ENCODE measurements at regions of chr1 and their contacts with region 1.

Region 1: DNA sequence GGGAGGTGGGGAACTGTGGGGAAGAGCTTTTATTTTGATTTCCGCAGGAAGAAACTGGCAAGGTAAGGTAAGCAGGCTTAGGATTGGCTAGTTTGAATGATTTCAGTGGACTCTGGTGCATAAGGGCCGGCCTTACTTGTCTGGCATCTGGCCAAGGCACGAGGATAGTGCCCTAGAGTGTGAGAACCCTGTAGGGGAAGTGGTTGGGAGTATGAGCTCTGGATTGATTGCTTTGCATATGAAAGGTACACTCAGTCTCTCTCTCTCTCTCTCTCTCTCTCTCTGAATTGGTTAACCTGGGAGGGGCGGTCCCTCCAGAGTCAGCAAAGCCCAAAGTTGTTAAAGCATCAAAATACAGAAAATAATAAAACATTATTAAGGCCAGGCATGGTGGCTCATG is 463.0 kb downstream of the SIPA1L2 start:
- DNase-seq: no peak
- ATAC-seq: no peak
- H3K4me3 ChIP-seq: no peak overlapping the region
- H3K27ac ChIP-seq: no peak overlapping the region
- H3K4me1 ChIP-seq: peaks cover 29% of the 10 kb centered on the region
- H3K27me3 ChIP-seq: no peaks in the 10 kb centered on the region
- CTCF ChIP-seq: no peak

Region 2: DNA sequence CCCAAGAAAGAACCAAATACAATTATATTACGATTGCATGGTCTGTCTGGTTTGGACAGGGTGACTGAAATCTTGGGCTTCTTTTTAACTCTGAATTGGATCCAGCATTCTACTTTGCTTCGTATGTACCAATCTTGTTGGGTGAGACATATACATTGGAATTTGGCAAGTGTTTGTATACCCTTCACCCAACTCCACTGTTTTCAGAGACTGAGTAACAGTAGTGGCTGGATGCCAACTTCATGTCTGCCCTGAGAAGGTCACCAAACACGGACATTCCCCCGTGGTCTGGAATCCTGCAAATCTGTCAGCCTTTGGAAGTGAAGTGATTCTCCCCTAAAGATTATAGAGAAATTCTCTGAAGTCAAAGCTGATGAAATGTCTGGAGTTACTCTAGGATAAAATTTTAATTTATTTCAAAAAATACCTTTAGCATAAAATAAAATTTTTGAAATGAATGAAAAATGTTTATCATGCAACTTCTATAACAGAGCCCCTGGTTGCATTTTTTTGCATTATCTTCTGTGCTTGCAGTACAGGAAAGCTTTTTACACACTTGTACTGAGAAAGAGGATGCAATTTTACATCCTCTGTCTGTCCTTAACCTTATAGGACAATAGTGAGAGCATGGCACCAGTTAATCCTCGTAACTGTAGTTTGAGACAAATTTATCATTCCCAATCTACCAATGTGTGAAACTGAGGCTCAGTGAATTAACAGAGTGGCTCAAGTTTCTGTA is 338.6 kb before region 1 on chr1:
- CTCF ChIA-PET with region 1: no interaction called
- POLR2A ChIA-PET with region 1: no interaction called
- intact Hi-C with region 1: loop called (anchors 5 kb)
- DNase-seq: peak; percentile 99
- ATAC-seq: peak; percentile 88
- H3K4me3 ChIP-seq: peak overlapping the region; percentile 51
- H3K27ac ChIP-seq: peak overlapping the region; percentile 97
- H3K4me1 ChIP-seq: peaks cover 38% of the 10 kb centered on the region
- H3K27me3 ChIP-seq: no peaks in the 10 kb centered on the region
- CTCF ChIP-seq: no peak

Region 3: GRCh38 chr1:232033285-232033684 is 133.7 kb before region 1 on chr1:
- CTCF ChIA-PET with region 1: no interaction called
- POLR2A ChIA-PET with region 1: interaction called, 10 read pairs
- intact Hi-C with region 1: no loop called
- DNase-seq: no peak
- ATAC-seq: no peak
- H3K4me3 ChIP-seq: no peak overlapping the region
- H3K27ac ChIP-seq: no peak overlapping the region
- H3K4me1 ChIP-seq: no peaks in the 10 kb centered on the region
- H3K27me3 ChIP-seq: no peaks in the 10 kb centered on the region
- CTCF ChIP-seq: no peak

Region 4: DNA sequence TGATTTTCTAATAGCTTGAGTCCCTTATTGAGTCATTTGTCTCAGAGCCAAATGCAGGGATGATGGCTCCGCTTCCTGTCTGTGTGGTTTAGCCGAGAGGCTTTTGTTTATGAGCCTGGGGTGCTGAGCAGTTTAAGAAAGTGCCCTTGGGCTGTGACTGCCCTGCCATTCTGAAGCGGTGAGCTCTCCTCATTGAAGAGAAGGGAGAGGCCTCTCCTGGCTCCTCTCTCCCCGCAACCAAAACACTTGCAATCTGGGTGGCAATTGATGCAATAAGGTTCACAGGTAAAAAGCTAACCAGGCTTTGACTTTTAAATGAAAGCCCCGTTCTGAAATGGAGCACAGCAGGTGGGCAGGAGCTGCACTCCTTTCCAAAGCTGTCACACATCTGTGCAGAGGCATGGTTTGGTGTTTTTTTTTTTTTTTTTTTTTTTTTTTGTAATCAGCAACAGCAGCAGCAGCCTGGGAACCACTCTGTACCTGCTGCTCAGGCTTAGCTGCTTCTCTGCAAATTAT is 59.3 kb after region 1 on chr1:
- CTCF ChIA-PET with region 1: interaction called, 4 read pairs
- POLR2A ChIA-PET with region 1: no interaction called
- intact Hi-C with region 1: loop called (anchors 1 kb)
- DNase-seq: peak; percentile 97
- ATAC-seq: peak; percentile 64
- H3K4me3 ChIP-seq: peak overlapping the region; percentile 25; the same call in 1 of the 2 replicates
- H3K27ac ChIP-seq: peak overlapping the region; percentile 62
- H3K4me1 ChIP-seq: peaks cover 50% of the 10 kb centered on the region
- H3K27me3 ChIP-seq: no peaks in the 10 kb centered on the region
- CTCF ChIP-seq: no peak

Region 5: GRCh38 chr1:232477728-232478127 is 310.8 kb after region 1 on chr1:
- CTCF ChIA-PET with region 1: no interaction called
- POLR2A ChIA-PET with region 1: no interaction called
- intact Hi-C with region 1: loop called (anchors 5 kb)
- DNase-seq: peak; percentile 99
- ATAC-seq: peak; percentile 87
- H3K4me3 ChIP-seq: no peak overlapping the region
- H3K27ac ChIP-seq: peak overlapping the region; percentile 83
- H3K4me1 ChIP-seq: peaks cover 32% of the 10 kb centered on the region
- H3K27me3 ChIP-seq: no peaks in the 10 kb centered on the region
- CTCF ChIP-seq: no peak